WTC11 (cell line): ENCODE measurements at regions of chr9 and their contacts with region 1.

Region 1: GRCh38 chr9:34145165-34145564 is 18.7 kb upstream of the DCAF12 start:
- DNase-seq: no peak
- ATAC-seq: peak; percentile 32; the same call in 1 of the 2 replicates
- H3K4me3 Mint-ChIP-seq: no peak overlapping the region
- H3K27ac Mint-ChIP-seq: peak overlapping the region; percentile 25; the same call in 1 of the 2 replicates
- H3K4me1 Mint-ChIP-seq: no peaks in the 10 kb centered on the region
- H3K27me3 Mint-ChIP-seq: no peaks in the 10 kb centered on the region; the same call in 1 of the 2 replicates
- CTCF ChIP-seq: no peak

Region 2: GRCh38 chr9:34158362-34158869 is 13.3 kb after region 1 on chr9:
- CTCF ChIA-PET with region 1: interaction called, 11 read pairs
- POLR2A ChIA-PET with region 1: no interaction called
- DNase-seq: no peak
- ATAC-seq: no peak
- H3K4me3 Mint-ChIP-seq: no peak overlapping the region
- H3K27ac Mint-ChIP-seq: no peak overlapping the region
- H3K4me1 Mint-ChIP-seq: peaks cover 8% of the 10 kb centered on the region
- H3K27me3 Mint-ChIP-seq: no peaks in the 10 kb centered on the region
- CTCF ChIP-seq: no peak

Region 3: GRCh38 chr9:35014517-35014916 is 869.4 kb after region 1 on chr9:
- CTCF ChIA-PET with region 1: no interaction called
- POLR2A ChIA-PET with region 1: interaction called, 10 read pairs
- DNase-seq: no peak
- ATAC-seq: no peak
- H3K4me3 Mint-ChIP-seq: no peak overlapping the region
- H3K27ac Mint-ChIP-seq: no peak overlapping the region
- H3K4me1 Mint-ChIP-seq: peaks cover 10% of the 10 kb centered on the region
- H3K27me3 Mint-ChIP-seq: peaks cover 20% of the 10 kb centered on the region
- CTCF ChIP-seq: no peak